ENCODE measurements at regions of chr18 and their contacts with region 1.

Region 1: DNA sequence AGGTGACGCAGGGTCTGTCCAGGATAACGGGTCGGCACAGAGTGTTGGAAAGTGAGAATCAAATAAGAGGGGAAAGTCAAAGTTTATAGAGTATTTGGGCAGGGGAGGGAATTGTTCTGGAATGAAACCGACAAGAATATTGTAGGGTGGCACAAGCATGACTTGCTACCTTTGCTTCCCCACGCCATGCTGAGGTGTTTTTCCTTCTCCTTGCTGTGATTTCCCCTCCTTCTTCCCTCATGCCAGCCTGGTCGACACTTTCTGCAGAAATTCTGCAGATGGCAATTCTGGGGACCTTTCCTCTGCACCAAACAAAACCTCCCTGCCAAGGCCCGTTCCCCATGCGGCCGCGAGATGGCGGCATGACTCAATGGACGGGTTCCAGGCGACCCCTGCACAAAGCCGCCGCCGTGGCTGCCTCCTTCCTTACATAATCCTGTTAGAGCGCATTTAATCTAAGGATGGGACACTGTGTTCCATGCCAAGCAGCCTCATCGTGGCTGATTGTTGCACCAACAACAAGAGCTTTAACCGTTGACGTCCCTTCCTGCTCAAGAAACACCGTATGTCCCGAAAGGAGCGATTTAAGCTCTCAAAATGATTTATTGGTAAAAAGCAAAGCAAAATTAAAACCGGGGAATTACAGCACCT is at the start of gene MRO:
- DNase-seq: peak; percentile 63 to 77
- H3K4me3 ChIP-seq: peak within 1 kb of the TSS; percentile 33
- H3K4me3 Mint-ChIP-seq: no peak within 1 kb of the TSS
- H3K27ac Mint-ChIP-seq: no peak within 1 kb of the TSS
- H3K4me1 ChIP-seq: no peaks in the 10 kb centered on the region
- H3K4me1 Mint-ChIP-seq: no peaks in the 10 kb centered on the region
- H3K27me3 ChIP-seq: no peaks in the 10 kb centered on the region
- H3K27me3 Mint-ChIP-seq: peaks cover 3% of the 10 kb centered on the region
- CTCF ChIP-seq: peak; percentile 56 to 84
- total RNA-seq, gene MRO: 0.21 TPM in 1 of 2 replicates, not detected in the other

Region 2: GRCh38 chr18:50507120-50507590 is 312.7 kb before region 1 on chr18:
- CTCF ChIA-PET with region 1: no interaction called
- POLR2A ChIA-PET with region 1: no interaction called
- intact Hi-C with region 1: loop called (anchors 1 kb)
- DNase-seq: peak; percentile 37 to 59
- H3K4me3 ChIP-seq: no peak overlapping the region
- H3K4me3 Mint-ChIP-seq: no peak overlapping the region
- H3K27ac Mint-ChIP-seq: no peak overlapping the region
- H3K4me1 ChIP-seq: no peaks in the 10 kb centered on the region
- H3K4me1 Mint-ChIP-seq: no peaks in the 10 kb centered on the region
- H3K27me3 ChIP-seq: no peaks in the 10 kb centered on the region
- H3K27me3 Mint-ChIP-seq: peaks cover under 1% of the 10 kb centered on the region
- CTCF ChIP-seq: peak; percentile 47 to 71

Region 3: GRCh38 chr18:50866765-50867164 is 46.9 kb after region 1 on chr18:
- CTCF ChIA-PET with region 1: interaction called, 3 read pairs
- POLR2A ChIA-PET with region 1: no interaction called
- intact Hi-C with region 1: loop called (anchors 1 kb)
- DNase-seq: no peak
- H3K4me3 ChIP-seq: no peak overlapping the region
- H3K4me3 Mint-ChIP-seq: no peak overlapping the region
- H3K27ac Mint-ChIP-seq: no peak overlapping the region
- H3K4me1 ChIP-seq: no peaks in the 10 kb centered on the region
- H3K4me1 Mint-ChIP-seq: no peaks in the 10 kb centered on the region
- H3K27me3 ChIP-seq: no peaks in the 10 kb centered on the region
- H3K27me3 Mint-ChIP-seq: no peaks in the 10 kb centered on the region
- CTCF ChIP-seq: no peak

Measured in Caco-2 (cell line).